Endothelial cell of umbilical vein (primary cell): ENCODE measurements at regions of chr3 and their contacts with region 1.

Region 1: DNA sequence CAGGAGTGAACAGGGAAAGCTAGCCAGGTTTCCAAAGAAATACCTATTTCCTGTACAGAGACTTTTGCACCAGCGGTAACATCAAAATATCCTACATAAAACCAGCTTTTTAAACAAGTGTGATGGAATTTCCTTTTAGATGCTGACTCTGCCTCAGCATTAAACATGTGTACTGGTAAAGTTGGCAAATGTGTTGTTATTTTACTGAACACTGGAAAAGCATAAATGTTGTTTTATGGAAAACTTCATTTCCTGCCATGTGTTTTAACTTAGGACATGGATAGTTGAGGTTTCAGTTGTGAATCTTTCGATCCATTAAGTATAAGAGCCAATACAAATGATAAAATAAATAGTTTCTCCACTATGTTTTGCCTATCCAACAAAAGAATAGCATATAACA is 15.7 kb downstream of the OXNAD1 start:
- DNase-seq: peak; percentile 77
- H3K4me3 ChIP-seq: no peak overlapping the region
- H3K27ac ChIP-seq: no peak overlapping the region
- H3K4me1 ChIP-seq: peaks cover 24% of the 10 kb centered on the region
- H3K27me3 ChIP-seq: no peaks in the 10 kb centered on the region
- CTCF ChIP-seq: no peak
- POLR2A ChIP-seq: no peak

Region 2: DNA sequence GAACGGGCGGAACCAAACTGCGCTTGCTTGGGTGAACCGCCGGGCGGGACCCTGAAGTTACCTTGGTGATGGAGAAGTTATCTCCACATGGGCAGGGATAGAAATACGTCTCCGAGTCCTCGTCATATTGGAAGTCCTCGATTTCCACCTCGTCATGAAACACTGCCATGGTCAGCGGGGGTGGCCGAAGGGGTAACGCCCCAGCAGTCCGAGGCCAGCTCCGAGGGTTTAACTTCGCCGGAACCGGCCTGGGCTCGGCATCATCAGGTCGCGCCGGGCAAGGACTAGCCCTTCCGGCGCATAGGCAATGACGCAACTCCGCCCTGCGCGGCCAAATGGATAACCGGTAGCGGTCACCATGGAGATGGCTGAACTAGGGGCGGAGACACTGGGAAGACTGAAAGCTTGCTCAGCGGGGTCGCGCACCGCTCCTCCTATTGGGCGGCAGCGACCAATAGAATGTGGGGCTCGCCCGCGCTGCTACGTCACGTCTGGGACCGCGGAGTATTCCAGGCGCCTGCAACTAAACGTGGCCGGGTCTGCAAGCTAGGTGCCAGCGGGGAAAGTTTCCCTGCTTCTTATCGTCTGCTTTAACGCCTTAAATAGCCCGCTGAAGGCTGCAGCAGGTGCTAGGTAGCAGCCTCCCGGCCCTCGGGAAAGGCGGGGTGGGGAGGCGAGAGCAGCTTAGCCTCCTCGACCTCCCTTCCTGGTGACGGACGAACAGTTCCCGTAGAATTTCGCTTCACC is 15.8 kb before region 1 on chr3 and contains the starts of genes DPH3 and OXNAD1:
- CTCF ChIA-PET with region 1: interaction called, 13 read pairs
- POLR2A ChIA-PET with region 1: no interaction called
- dilution Hi-C with region 1: no loop called
- intact Hi-C with region 1: loop called (anchors 1 kb)
- DNase-seq: peak; percentile 99
- H3K4me3 ChIP-seq: peak within 1 kb of the TSS; percentile 66 to 93 (median 72)
- H3K27ac ChIP-seq: peak within 1 kb of the TSS; percentile 82
- H3K4me1 ChIP-seq: peaks cover 23% of the 10 kb centered on the region
- H3K27me3 ChIP-seq: no peaks in the 10 kb centered on the region
- CTCF ChIP-seq: no peak
- POLR2A ChIP-seq: peak; percentile 82
- total RNA-seq, gene DPH3: 28.7 and 29.6 TPM in 2 replicates
- total RNA-seq, gene OXNAD1: 8.9 and 9.7 TPM in 2 replicates